Gastrocnemius medialis (tissue), 4 donors: ENCODE measurements at regions of chrX and their contacts with region 1.

Region 1: GRCh38 chrX:17814557-17814956 is 46.5 kb downstream of the RAI2 start:
- DNase-seq: no peak
- ATAC-seq: no peak
- H3K4me3 ChIP-seq: no peak overlapping the region
- H3K27ac ChIP-seq: no peak overlapping the region
- H3K4me1 ChIP-seq: peaks cover 0 to 3% of the 10 kb centered on the region in 2 donors
- H3K27me3 ChIP-seq: no peaks in the 10 kb centered on the region
- CTCF ChIP-seq: no peak
- POLR2A ChIP-seq: no peak

Region 2: DNA sequence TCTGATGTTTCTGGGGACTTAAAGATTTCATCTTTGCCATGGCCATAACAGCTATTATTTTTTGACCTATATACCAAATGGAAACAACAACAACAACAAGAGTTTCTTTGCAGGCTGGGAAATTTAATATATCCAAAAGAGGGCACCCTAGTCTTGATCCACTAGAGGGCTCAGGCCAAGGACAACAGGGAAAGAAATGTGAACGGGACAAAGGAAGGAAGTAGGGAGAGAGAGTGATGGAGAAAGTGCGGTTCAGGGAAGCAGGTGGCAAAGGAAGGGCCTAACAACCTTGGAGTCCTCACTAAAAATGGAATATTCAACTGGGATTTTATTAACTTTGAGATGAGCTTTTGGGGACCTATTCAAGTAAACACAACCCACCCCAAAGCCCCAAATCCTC is 145.1 kb before region 1 on chrX:
- in situ Hi-C with region 1: no loop called
- intact Hi-C with region 1: no loop called
- DNase-seq: no peak
- ATAC-seq: no peak
- H3K4me3 ChIP-seq: no peak overlapping the region
- H3K27ac ChIP-seq: no peak overlapping the region
- H3K4me1 ChIP-seq: no peaks in the 10 kb centered on the region
- H3K27me3 ChIP-seq: no peaks in the 10 kb centered on the region
- CTCF ChIP-seq: no peak
- POLR2A ChIP-seq: no peak

Region 3: GRCh38 chrX:17846045-17846444 is 31.5 kb after region 1 on chrX:
- in situ Hi-C with region 1: no loop called
- intact Hi-C with region 1: loop called (anchors 1 kb)
- DNase-seq: peak in 1 of 2 donors; percentile 42
- ATAC-seq: peak; percentile 74 to 90
- H3K4me3 ChIP-seq: no peak overlapping the region
- H3K27ac ChIP-seq: peak overlapping the region in 1 of 4 donors; percentile 64
- H3K4me1 ChIP-seq: peaks cover 0 to 18% of the 10 kb centered on the region in 2 donors
- H3K27me3 ChIP-seq: no peaks in the 10 kb centered on the region
- CTCF ChIP-seq: no peak
- POLR2A ChIP-seq: no peak

Region 4: DNA sequence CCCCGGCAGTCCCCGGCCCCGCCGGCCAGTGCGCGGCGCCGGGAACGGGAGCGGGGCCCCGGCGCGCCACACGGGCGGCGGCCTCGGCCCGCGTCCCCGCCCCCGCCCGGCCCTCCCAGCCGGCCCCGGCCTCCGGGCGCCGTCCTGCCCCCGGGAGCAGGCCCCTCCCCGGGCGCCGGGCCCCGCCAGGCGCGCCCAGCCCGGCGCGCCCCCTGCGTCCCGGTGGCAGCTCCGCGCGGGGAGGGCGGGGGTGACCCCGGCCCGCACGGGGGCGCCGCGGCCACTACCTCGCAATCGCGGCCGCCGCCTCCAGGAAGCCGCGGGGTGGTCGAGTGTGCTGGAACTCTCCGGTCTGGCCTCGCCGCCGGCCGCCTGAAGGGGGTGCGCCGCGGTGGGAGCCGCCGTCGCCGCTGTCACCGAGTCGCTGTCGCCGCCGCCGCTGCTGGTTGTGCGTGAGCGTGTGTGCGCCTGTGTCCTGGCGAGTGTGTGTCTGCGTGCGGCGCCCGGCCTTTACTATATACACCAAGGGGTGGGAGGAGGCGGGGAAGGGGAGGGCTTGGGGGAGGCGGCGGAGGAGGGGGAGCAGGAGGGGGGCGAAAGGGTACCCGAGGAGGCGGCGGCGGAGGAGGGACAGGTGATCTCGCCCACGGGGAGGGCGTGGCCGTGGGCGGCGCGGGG is 46.4 kb after region 1 on chrX and contains the start of gene RAI2:
- in situ Hi-C with region 1: no loop called
- intact Hi-C with region 1: loop called (anchors 5 kb)
- DNase-seq: no peak
- ATAC-seq: peak; percentile 61 to 69
- H3K4me3 ChIP-seq: peak within 1 kb of the TSS; percentile 53 to 63 (median 62)
- H3K27ac ChIP-seq: peak within 1 kb of the TSS; percentile 50 to 67 (median 55)
- H3K4me1 ChIP-seq: peaks cover 0 to 3% of the 10 kb centered on the region in 2 donors
- H3K27me3 ChIP-seq: peaks cover 0 to 15% (median 0%) of the 10 kb centered on the region in 3 donors
- CTCF ChIP-seq: peak in 1 of 5 experiments; percentile 18
- POLR2A ChIP-seq: peak in 1 of 2 donors; percentile 28
- total RNA-seq, gene RAI2: 2.5 to 8.5 (median 4.6) TPM